Vagina (tissue), 2 donors: ENCODE measurements at regions of chr7 and their contacts with region 1.

Region 1: GRCh38 chr7:154947604-154948003 is 55.3 kb downstream of the PAXIP1 start:
- DNase-seq: no peak
- H3K4me3 ChIP-seq: no peak overlapping the region
- H3K27ac ChIP-seq: no peak overlapping the region
- H3K4me1 ChIP-seq: no peaks in the 10 kb centered on the region
- H3K27me3 ChIP-seq: no peaks in the 10 kb centered on the region
- CTCF ChIP-seq: no peak
- POLR2A ChIP-seq: no peak

Region 2: DNA sequence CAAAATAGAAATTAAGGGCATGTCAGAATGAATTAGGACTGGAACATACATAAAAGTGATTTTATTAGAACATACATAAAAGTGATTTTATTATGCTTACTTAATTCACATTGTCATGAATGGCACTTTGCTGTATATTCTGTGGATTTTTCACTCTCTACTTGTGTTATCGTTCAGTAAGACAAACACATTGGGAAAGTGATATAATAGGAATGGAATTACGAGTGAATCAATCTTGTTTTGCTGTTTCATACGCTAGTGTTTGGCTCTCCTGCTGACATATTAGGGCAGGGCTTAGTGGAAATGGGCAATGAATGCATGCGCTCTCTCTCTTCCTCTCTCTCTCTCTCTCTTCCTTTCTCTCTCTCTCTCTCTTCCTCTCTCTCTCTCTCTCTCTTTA is 1626.9 kb before region 1 on chr7:
- intact Hi-C with region 1: no loop called
- DNase-seq: no peak
- H3K4me3 ChIP-seq: no peak overlapping the region
- H3K27ac ChIP-seq: no peak overlapping the region
- H3K4me1 ChIP-seq: no peaks in the 10 kb centered on the region
- H3K27me3 ChIP-seq: no peaks in the 10 kb centered on the region
- CTCF ChIP-seq: no peak
- POLR2A ChIP-seq: no peak

Region 3: DNA sequence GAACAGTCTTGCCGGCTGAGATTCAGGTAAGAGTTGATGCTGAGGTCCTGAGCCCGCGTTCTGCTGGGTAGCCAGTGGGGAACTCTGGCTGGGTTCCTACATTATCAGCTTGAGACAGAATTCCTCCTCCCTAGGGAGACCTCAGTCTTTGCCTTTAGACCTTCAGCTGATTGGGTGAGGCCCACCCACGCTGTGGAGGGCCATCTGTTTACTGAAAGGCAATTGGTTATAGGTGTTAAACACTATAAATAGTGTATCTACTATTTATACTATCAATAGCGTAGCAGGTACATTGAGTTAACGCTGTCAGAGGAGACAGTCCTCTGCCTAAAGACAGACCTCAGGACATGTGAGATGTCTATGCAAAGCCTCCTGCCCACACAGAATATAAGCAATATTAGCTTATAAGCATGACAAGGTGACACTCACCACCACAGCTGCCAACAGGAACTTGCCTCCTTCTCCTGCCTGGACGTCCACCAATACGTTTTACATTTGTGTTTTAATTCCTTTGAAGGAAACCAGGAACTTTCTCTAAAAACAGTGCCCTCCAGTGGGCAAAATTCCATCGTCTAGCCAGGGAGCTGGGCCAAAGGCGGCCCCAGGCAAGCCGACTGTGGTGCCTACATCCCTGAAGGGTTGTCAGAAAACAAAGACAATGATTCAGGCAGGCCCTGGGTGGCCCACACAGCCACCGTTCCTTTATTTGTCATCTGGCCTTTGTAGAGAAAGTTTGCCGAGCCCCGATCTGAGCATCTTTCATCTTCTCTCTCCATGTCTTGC is 408.9 kb after region 1 on chr7:
- intact Hi-C with region 1: loop called (anchors 10 kb)
- DNase-seq: no peak
- H3K4me3 ChIP-seq: no peak overlapping the region
- H3K27ac ChIP-seq: no peak overlapping the region
- H3K4me1 ChIP-seq: no peaks in the 10 kb centered on the region
- H3K27me3 ChIP-seq: no peaks in the 10 kb centered on the region
- CTCF ChIP-seq: no peak
- POLR2A ChIP-seq: no peak